PC-3 (cell line): ENCODE measurements at regions of chr4 and their contacts with region 1.

Region 1: GRCh38 chr4:140153718-140154571 is at the start of gene MAML3:
- DNase-seq: peak; percentile 87
- ATAC-seq: peak; percentile 14
- H3K4me3 ChIP-seq: peak within 1 kb of the TSS; percentile 88
- H3K27ac ChIP-seq: peak within 1 kb of the TSS; percentile 93
- H3K4me1 ChIP-seq: peaks cover 8% of the 10 kb centered on the region
- H3K27me3 ChIP-seq: no peaks in the 10 kb centered on the region
- CTCF ChIP-seq: no peak
- total RNA-seq, gene MAML3: 3.9 and 4.3 TPM in 2 replicates

Region 2: DNA sequence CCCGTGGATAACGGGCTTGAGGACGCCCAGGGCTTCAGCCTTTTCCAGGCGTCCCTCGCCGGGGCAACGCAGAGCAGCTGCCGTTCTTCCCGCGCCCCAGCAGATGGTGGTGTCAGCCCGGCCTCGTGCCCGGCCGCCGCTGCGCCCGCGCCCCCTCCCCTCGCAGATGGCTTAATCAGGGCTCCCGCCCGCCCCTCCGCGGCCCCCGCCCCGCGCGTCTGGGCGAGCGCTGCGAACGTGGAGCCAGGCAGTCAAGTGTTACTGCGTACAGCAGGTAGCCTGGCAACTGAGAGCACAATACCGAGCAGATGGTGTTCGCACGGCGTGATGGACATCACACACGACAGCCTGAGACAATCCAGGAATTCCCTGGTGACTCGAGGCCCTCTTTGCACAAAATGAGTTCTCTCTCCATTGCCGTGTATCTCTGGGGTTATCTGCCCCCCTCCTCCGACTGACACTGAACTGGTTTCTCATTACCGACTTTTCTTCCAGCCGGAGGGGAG is 419.0 kb before region 1 on chr4:
- CTCF ChIA-PET with region 1: no interaction called
- POLR2A ChIA-PET with region 1: no interaction called
- intact Hi-C with region 1: loop called (anchors 2 kb)
- DNase-seq: peak; percentile 51
- ATAC-seq: peak; percentile 89
- H3K4me3 ChIP-seq: peak overlapping the region; percentile 60
- H3K27ac ChIP-seq: no peak overlapping the region
- H3K4me1 ChIP-seq: peaks cover 4% of the 10 kb centered on the region; the same call in 1 of the 2 replicates
- H3K27me3 ChIP-seq: no peaks in the 10 kb centered on the region
- CTCF ChIP-seq: peak; percentile 68

Region 3: DNA sequence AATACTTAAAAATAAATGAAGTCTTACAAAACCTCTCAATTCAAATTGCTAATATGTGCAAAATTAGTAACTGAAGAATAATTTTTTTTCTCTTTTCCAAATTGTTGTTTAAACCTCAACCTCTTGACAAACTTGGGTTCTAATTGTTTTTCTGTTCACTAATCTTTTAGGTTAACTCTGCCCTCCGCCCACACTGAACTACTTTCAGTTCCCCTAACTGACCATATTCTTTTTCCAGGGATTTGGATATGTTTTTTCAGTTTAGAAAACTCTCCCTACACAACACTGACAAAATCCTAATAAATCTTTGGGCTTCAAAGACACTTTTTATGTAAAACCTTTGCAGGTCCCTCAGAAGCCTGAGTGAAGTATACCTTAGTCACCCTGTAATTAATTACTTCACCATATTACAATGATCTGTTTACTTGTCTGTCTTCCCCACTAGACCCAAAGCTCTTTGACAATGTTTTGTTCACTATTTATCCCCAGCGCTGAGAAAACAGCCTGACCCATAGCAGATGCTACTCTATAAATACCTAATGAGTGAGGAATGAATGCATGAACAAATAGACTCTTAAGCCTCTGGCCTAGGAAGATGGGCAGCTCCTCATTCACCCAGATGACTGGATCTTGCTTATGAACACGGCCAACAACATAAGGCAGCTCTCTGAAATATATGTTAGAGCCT is 134.9 kb before region 1 on chr4:
- CTCF ChIA-PET with region 1: no interaction called
- POLR2A ChIA-PET with region 1: no interaction called
- intact Hi-C with region 1: loop called (anchors 1 kb)
- DNase-seq: peak; percentile 87
- ATAC-seq: peak; percentile 90
- H3K4me3 ChIP-seq: peak overlapping the region; percentile 36; the same call in 1 of the 2 replicates
- H3K27ac ChIP-seq: peak overlapping the region; percentile 94
- H3K4me1 ChIP-seq: peaks cover 37% of the 10 kb centered on the region
- H3K27me3 ChIP-seq: no peaks in the 10 kb centered on the region
- CTCF ChIP-seq: no peak

Region 4: GRCh38 chr4:140031061-140031460 is 122.9 kb before region 1 on chr4:
- CTCF ChIA-PET with region 1: no interaction called
- POLR2A ChIA-PET with region 1: no interaction called
- intact Hi-C with region 1: no loop called
- DNase-seq: no peak
- ATAC-seq: no peak
- H3K4me3 ChIP-seq: no peak overlapping the region
- H3K27ac ChIP-seq: no peak overlapping the region
- H3K4me1 ChIP-seq: no peaks in the 10 kb centered on the region; the same call in 1 of the 2 replicates
- H3K27me3 ChIP-seq: no peaks in the 10 kb centered on the region
- CTCF ChIP-seq: no peak

Region 5: GRCh38 chr4:140099983-140100382 is 54.0 kb before region 1 on chr4:
- CTCF ChIA-PET with region 1: no interaction called
- POLR2A ChIA-PET with region 1: interaction called, 3 read pairs
- intact Hi-C with region 1: loop called (anchors 1 kb)
- DNase-seq: peak; percentile 63
- ATAC-seq: peak; percentile 37; the same call in 1 of the 2 replicates
- H3K4me3 ChIP-seq: no peak overlapping the region
- H3K27ac ChIP-seq: peak overlapping the region; percentile 98
- H3K4me1 ChIP-seq: peaks cover 79% of the 10 kb centered on the region
- H3K27me3 ChIP-seq: no peaks in the 10 kb centered on the region
- CTCF ChIP-seq: no peak

Region 6: DNA sequence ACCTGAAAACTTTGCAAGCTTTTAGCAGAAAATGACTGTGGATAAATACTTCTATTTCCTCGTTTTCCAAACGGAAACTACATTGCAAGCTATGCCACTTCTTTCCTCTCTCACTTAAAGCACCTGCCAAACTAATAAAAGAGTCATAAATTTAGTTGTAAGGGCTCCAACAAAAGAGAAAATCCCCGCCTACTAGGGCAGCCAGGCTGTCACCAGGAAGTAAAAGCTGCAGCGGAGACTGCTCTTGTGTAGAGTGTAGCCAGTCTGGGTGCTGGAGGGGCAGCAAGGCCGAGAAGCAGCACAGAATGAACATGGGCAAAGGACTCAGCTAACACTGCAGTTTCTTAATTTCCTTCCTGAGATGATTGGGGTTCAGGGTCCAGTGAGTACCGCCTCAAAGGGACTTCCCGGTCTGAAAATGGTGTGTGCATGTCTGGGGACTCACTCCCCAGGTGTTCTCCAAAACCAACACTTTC is 89.4 kb after region 1 on chr4:
- CTCF ChIA-PET with region 1: interaction called, 3 read pairs
- POLR2A ChIA-PET with region 1: no interaction called
- intact Hi-C with region 1: loop called (anchors 2 kb)
- DNase-seq: peak; percentile 75
- ATAC-seq: peak; percentile 80
- H3K4me3 ChIP-seq: peak overlapping the region; percentile 21; the same call in 1 of the 2 replicates
- H3K27ac ChIP-seq: peak overlapping the region; percentile 33
- H3K4me1 ChIP-seq: peaks cover 20% of the 10 kb centered on the region
- H3K27me3 ChIP-seq: no peaks in the 10 kb centered on the region
- CTCF ChIP-seq: no peak

Region 7: GRCh38 chr4:140326395-140326993 is 172.5 kb after region 1 on chr4:
- CTCF ChIA-PET with region 1: no interaction called
- POLR2A ChIA-PET with region 1: no interaction called
- intact Hi-C with region 1: loop called (anchors 1 kb)
- DNase-seq: peak; percentile 59
- ATAC-seq: peak; percentile 86
- H3K4me3 ChIP-seq: no peak overlapping the region
- H3K27ac ChIP-seq: no peak overlapping the region
- H3K4me1 ChIP-seq: no peaks in the 10 kb centered on the region
- H3K27me3 ChIP-seq: no peaks in the 10 kb centered on the region
- CTCF ChIP-seq: peak; percentile 82